B cell (primary cell): ENCODE measurements at regions of chr17 and their contacts with region 1.

Region 1: DNA sequence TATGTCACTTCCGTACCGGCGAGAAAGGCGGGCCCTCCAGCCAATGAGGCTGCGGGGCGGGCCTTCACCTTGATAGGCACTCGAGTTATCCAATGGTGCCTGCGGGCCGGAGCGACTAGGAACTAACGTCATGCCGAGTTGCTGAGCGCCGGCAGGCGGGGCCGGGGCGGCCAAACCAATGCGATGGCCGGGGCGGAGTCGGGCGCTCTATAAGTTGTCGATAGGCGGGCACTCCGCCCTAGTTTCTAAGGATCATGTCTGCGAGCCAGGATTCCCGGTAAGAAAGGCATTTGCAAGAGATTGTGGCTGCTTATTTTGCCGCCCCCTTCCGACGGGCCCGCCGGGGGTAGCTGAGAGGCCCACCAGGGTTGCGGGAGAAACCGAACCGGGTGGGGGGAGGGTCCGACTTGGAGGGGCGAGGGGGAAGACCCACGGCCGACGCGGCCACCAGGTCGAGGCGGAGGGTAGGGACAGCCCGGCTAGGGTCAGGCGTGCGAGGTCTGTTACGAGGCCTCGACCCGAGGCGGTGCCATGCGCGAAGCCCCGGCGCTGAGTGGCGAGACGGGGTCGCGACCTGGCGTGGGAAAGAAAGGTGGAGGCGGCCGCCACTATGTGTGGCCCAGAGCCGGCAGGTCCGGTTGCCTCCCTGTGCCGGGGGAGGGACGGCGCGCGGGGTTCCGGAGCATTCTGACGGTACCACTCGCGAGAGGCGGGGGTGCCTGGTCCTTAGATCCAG is 6.7 kb upstream of the CD68 start:
- DNase-seq: peak; percentile 100
- ATAC-seq: peak; percentile 83
- H3K4me3 ChIP-seq: peak overlapping the region; percentile 72 to 98 (median 93)
- H3K4me3 Mint-ChIP-seq: peak overlapping the region; percentile 94
- H3K27ac ChIP-seq: peak overlapping the region; percentile 85 to 94
- H3K27ac Mint-ChIP-seq: peak overlapping the region; percentile 99
- H3K4me1 ChIP-seq: peaks cover 22 to 29% of the 10 kb centered on the region in 2 donors
- H3K4me1 Mint-ChIP-seq: peaks cover 52% of the 10 kb centered on the region
- H3K27me3 ChIP-seq: no peaks in the 10 kb centered on the region
- H3K27me3 Mint-ChIP-seq: no peaks in the 10 kb centered on the region
- CTCF ChIP-seq: no peak

Region 2: DNA sequence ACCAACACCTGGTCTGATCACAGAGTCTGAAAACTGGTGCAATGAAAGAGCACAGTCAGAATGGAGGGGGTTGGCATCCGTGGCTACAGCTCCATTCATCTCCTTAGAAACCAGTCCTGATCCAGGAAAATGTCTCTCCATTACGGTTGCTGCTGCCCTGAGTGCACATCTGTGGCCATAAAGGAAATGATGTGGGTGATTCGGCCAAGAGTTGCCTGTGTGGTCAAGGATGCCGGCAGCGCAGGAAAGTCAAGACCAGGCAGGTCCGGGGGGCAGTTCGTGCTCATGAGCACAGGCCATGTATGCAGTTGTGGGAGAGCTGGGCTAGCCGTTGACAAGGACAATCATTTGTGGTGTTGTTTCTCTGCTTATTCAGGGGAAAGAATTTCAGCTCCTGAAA is 811.0 kb before region 1 on chr17:
- CTCF ChIA-PET with region 1: no interaction called
- POLR2A ChIA-PET with region 1: no interaction called
- intact Hi-C with region 1: no loop called
- DNase-seq: no peak
- ATAC-seq: no peak
- H3K4me3 ChIP-seq: no peak overlapping the region
- H3K4me3 Mint-ChIP-seq: no peak overlapping the region
- H3K27ac ChIP-seq: no peak overlapping the region
- H3K27ac Mint-ChIP-seq: no peak overlapping the region
- H3K4me1 ChIP-seq: peaks cover 5 to 15% of the 10 kb centered on the region in 2 donors
- H3K4me1 Mint-ChIP-seq: peaks cover 13% of the 10 kb centered on the region
- H3K27me3 ChIP-seq: no peaks in the 10 kb centered on the region
- H3K27me3 Mint-ChIP-seq: no peaks in the 10 kb centered on the region
- CTCF ChIP-seq: no peak

Region 3: DNA sequence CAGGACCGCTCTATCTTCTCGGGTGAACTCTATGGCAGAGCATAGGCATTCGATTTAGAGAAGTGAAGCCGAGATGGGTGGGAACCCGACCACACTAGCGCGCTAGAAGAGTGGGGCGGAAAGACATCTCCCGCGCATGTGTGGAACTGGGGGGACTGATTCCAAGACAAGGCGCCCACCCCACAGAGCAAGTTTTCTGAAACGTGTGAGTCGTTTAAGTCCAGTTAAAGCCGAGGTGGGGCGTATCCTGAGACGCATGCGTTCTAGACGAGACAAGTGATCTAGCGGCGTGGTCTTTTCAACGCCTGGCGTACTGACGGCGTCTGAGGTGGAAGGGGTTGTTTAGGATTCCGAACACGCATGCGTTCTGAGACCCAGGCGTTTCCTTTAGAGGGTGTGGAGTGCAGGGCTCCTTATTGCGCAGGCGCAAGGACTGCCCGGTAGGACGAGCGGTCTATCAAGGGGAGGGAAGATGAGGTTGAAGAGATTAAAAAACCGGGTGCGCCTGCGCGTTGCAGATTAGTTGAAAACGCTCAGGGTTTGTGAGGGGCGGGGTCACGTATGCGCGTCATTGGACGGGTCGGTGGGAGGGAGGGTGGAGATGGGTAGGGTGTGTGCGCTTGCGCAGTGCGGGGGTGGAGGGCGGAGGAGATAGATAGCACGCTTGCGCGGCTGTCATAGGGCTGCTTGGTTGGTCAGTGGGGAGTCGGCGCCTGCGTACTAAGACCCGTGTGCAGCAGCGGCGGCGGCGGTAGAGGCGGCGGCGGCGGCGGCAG is 265.7 kb before region 1 on chr17 and contains the start of gene EIF5A:
- CTCF ChIA-PET with region 1: no interaction called
- POLR2A ChIA-PET with region 1: no interaction called
- intact Hi-C with region 1: loop called (anchors 1 kb)
- DNase-seq: peak; percentile 100
- ATAC-seq: peak; percentile 70
- H3K4me3 ChIP-seq: peak within 1 kb of the TSS; percentile 81 to 96 (median 94)
- H3K4me3 Mint-ChIP-seq: peak within 1 kb of the TSS; percentile 95
- H3K27ac ChIP-seq: peak within 1 kb of the TSS; percentile 98 to 99
- H3K27ac Mint-ChIP-seq: peak within 1 kb of the TSS; percentile 99
- H3K4me1 ChIP-seq: peaks cover 17 to 40% of the 10 kb centered on the region in 2 donors
- H3K4me1 Mint-ChIP-seq: peaks cover 39% of the 10 kb centered on the region
- H3K27me3 ChIP-seq: no peaks in the 10 kb centered on the region
- H3K27me3 Mint-ChIP-seq: no peaks in the 10 kb centered on the region
- CTCF ChIP-seq: no peak
- total RNA-seq, gene EIF5A: 233 and 236 TPM in 2 replicates

Region 4: GRCh38 chr17:7429265-7429664 is 143.5 kb before region 1 on chr17:
- CTCF ChIA-PET with region 1: no interaction called
- POLR2A ChIA-PET with region 1: no interaction called
- intact Hi-C with region 1: no loop called
- DNase-seq: no peak
- ATAC-seq: no peak
- H3K4me3 ChIP-seq: no peak overlapping the region
- H3K4me3 Mint-ChIP-seq: no peak overlapping the region
- H3K27ac ChIP-seq: no peak overlapping the region
- H3K27ac Mint-ChIP-seq: no peak overlapping the region
- H3K4me1 ChIP-seq: no peaks in the 10 kb centered on the region
- H3K4me1 Mint-ChIP-seq: no peaks in the 10 kb centered on the region
- H3K27me3 ChIP-seq: peaks cover 0 to 3% (median 0%) of the 10 kb centered on the region in 4 experiments
- H3K27me3 Mint-ChIP-seq: peaks cover 4% of the 10 kb centered on the region
- CTCF ChIP-seq: no peak

Region 5: GRCh38 chr17:7484067-7484918 is 88.5 kb before region 1 on chr17 and contains the start of gene POLR2A:
- CTCF ChIA-PET with region 1: no interaction called
- POLR2A ChIA-PET with region 1: interaction called, 5 read pairs
- intact Hi-C with region 1: loop called (anchors 1 kb)
- DNase-seq: peak; percentile 99
- ATAC-seq: peak; percentile 63
- H3K4me3 ChIP-seq: peak within 1 kb of the TSS; percentile 80 to 100 (median 97)
- H3K4me3 Mint-ChIP-seq: peak within 1 kb of the TSS; percentile 99
- H3K27ac ChIP-seq: peak within 1 kb of the TSS; percentile 100
- H3K27ac Mint-ChIP-seq: peak within 1 kb of the TSS; percentile 100
- H3K4me1 ChIP-seq: peaks cover 29 to 53% of the 10 kb centered on the region in 2 donors
- H3K4me1 Mint-ChIP-seq: peaks cover 71% of the 10 kb centered on the region
- H3K27me3 ChIP-seq: no peaks in the 10 kb centered on the region
- H3K27me3 Mint-ChIP-seq: no peaks in the 10 kb centered on the region
- CTCF ChIP-seq: no peak
- total RNA-seq, gene POLR2A: 225 and 240 TPM in 2 replicates

Region 6: GRCh38 chr17:7561028-7561575 is 11.7 kb before region 1 on chr17:
- CTCF ChIA-PET with region 1: interaction called, 21 read pairs
- POLR2A ChIA-PET with region 1: interaction called, 7 read pairs
- intact Hi-C with region 1: loop called (anchors 1 kb)
- DNase-seq: peak; percentile 89
- ATAC-seq: peak; percentile 64
- H3K4me3 ChIP-seq: peak overlapping the region; percentile 53 to 95 (median 81)
- H3K4me3 Mint-ChIP-seq: peak overlapping the region; percentile 97
- H3K27ac ChIP-seq: peak overlapping the region; percentile 97
- H3K27ac Mint-ChIP-seq: peak overlapping the region; percentile 98
- H3K4me1 ChIP-seq: peaks cover 41 to 61% of the 10 kb centered on the region in 2 donors
- H3K4me1 Mint-ChIP-seq: peaks cover 53% of the 10 kb centered on the region
- H3K27me3 ChIP-seq: no peaks in the 10 kb centered on the region
- H3K27me3 Mint-ChIP-seq: no peaks in the 10 kb centered on the region
- CTCF ChIP-seq: peak; percentile 80

Region 7: DNA sequence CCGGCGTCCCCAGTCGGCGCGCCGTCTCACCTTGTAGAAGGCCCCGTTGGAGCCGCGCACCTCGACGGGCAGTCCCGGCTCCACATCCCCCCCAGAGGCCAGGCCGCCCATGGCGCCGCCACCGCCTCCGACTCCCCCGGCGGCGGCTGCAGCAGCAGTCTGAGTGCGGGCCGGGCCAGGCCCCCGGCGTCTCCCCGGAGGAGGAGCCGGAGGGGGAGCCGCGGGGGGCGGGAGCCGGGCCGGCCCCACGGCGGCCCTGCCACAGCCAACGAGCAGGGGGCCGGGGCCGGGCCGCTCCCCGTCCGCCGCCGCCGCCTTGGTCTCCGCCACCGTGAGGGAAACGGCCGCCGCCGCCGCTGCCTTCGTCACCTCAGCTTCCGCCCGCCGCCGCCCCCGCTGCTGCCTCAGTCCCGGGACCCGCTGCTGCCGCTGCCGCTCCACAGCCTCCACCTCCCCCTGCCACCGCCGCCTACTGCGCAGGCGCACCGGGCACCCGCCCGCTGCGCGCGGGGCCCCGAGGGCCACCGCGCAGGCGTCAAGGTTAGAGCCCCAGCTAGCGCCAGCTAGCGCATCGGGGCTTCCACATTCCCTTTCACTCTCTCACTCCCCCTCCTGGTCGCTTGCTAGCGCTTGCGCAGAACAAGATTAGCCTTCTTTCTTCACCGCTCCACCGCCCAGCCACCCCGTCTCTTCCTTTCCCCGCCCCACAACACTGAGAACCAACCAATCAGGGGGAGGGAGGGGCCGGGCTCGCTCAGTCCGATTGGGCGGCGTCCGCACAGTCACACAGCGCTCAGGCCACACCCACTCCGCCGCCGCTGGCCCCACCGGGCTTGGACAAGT is 41.9 kb after region 1 on chr17 and contains the start of gene FXR2:
- CTCF ChIA-PET with region 1: interaction called, 3 read pairs
- POLR2A ChIA-PET with region 1: interaction called, 3 read pairs
- intact Hi-C with region 1: loop called (anchors 1 kb)
- DNase-seq: peak; percentile 100
- ATAC-seq: peak; percentile 89
- H3K4me3 ChIP-seq: peak within 1 kb of the TSS; percentile 73 to 82 (median 76)
- H3K4me3 Mint-ChIP-seq: peak within 1 kb of the TSS; percentile 88
- H3K27ac ChIP-seq: peak within 1 kb of the TSS; percentile 67 to 85
- H3K27ac Mint-ChIP-seq: peak within 1 kb of the TSS; percentile 93
- H3K4me1 ChIP-seq: peaks cover 12 to 26% of the 10 kb centered on the region in 2 donors
- H3K4me1 Mint-ChIP-seq: peaks cover 22% of the 10 kb centered on the region
- H3K27me3 ChIP-seq: no peaks in the 10 kb centered on the region
- H3K27me3 Mint-ChIP-seq: no peaks in the 10 kb centered on the region
- CTCF ChIP-seq: peak; percentile 64
- total RNA-seq, gene FXR2: 44.7 and 45.8 TPM in 2 replicates